ENCODE measurements at regions of chr9 and their contacts with region 1.

Region 1: GRCh38 chr9:127809071-127809511 is 6.4 kb downstream of the FPGS start:
- DNase-seq: no peak
- H3K4me3 ChIP-seq: no peak overlapping the region
- H3K4me3 Mint-ChIP-seq: no peak overlapping the region
- H3K27ac Mint-ChIP-seq: no peak overlapping the region
- H3K4me1 ChIP-seq: 0 out of 2 replicates have a peak, but pooled peaks cover 2% of the 10 kb centered on the region
- H3K4me1 Mint-ChIP-seq: no peaks in the 10 kb centered on the region
- H3K27me3 ChIP-seq: no peaks in the 10 kb centered on the region
- H3K27me3 Mint-ChIP-seq: no peaks in the 10 kb centered on the region
- CTCF ChIP-seq: no peak

Region 2: DNA sequence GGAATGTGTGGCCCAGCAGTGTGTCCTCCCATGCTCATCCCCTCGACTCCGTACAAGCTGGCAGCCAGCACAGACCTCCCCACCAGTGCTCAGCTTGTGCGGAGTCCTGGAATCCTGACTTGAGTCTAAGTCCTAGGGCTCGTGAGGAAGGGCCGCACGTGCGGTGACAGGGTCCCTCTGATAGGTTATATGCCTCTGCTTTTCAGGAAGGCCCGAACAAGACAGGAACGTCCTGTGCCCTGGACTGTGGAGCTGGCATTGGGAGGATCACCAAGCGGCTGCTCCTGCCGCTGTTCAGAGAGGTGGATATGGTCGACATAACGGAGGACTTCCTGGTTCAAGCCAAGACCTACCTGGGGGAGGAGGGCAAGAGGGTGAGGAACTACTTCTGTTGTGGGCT is 1824.8 kb after region 1 on chr9:
- CTCF ChIA-PET with region 1: interaction called, 10 read pairs
- POLR2A ChIA-PET with region 1: no interaction called
- intact Hi-C with region 1: no loop called
- DNase-seq: no peak
- H3K4me3 ChIP-seq: no peak overlapping the region
- H3K4me3 Mint-ChIP-seq: no peak overlapping the region
- H3K27ac Mint-ChIP-seq: no peak overlapping the region
- H3K4me1 ChIP-seq: no peaks in the 10 kb centered on the region
- H3K4me1 Mint-ChIP-seq: peaks cover 5% of the 10 kb centered on the region
- H3K27me3 ChIP-seq: no peaks in the 10 kb centered on the region
- H3K27me3 Mint-ChIP-seq: no peaks in the 10 kb centered on the region
- CTCF ChIP-seq: no peak

Measured in Caco-2 (cell line).